Dorsolateral prefrontal cortex (tissue), 120 donors: ENCODE measurements at regions of chr18 and their contacts with region 1.

Region 1: DNA sequence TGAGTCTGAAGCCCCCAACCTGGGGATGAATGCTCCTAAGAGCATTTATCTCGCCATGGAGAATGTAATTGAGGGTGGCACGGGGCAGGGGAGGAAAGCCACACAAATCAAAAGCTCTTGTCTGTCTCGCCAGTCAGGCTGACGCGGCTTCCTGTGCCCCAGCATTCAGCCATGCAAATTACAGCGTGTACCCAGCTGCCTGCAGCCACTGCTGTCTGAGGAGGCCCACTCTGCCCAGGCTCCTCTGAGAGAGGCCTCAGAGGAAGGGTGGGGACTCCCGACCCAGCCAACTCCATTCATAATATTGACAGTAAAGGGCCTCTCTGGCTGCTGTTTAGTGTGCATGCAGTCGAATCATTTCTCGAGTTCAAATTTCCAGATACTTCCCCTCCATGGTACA is 22.0 kb downstream of the SMAD7 start:
- DNase-seq: peak in 9 of 10 donors; percentile 56 to 86 (median 74)
- H3K4me3 ChIP-seq: peak overlapping the region in 26 of 59 donors; percentile 2 to 40 (median 10)
- H3K27ac ChIP-seq: peak overlapping the region in 53 of 59 donors; percentile 23 to 90 (median 66)
- H3K27me3 ChIP-seq: no peaks in the 10 kb centered on the region
- CTCF ChIP-seq: no peak

Region 2: DNA sequence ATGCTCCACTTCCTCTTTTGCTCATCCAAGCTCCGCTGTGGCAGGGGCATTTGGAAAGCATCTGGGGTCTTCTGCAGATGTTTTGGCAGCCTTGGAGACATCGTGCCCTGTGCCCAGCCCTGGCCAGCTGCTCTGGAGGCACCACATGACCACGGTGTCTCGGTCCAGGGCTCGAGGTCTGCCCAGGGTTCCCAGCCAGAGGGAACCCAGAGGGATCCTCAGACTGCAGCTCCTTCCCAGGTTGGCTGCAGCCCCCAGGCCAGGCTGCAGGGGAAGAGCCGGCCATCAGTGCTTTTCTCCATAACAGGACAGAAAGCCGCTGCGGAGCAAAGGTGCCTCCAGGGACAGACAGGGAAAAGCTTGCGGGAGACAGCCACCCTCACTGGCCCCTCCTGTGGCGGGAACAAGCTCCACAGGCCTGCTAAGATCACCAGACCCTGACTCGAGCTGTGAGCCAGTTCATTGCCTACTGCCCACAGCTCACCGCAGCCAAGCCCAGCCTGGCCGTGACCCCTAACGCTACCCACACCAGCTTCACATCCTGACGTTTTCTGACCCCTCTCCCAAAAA is 52.8 kb before region 1 on chr18:
- intact Hi-C with region 1: loop called in 1 of 2 experiments (anchors 5 kb)
- DNase-seq: peak in 2 of 10 donors; percentile 20 to 39
- H3K4me3 ChIP-seq: no peak overlapping the region
- H3K27ac ChIP-seq: no peak overlapping the region
- H3K27me3 ChIP-seq: no peaks in the 10 kb centered on the region
- CTCF ChIP-seq: peak in 1 of 56 donors; percentile 11